Right cardiac atrium (tissue), 5 donors: ENCODE measurements at regions of chr17 and their contacts with region 1.

Region 1: DNA sequence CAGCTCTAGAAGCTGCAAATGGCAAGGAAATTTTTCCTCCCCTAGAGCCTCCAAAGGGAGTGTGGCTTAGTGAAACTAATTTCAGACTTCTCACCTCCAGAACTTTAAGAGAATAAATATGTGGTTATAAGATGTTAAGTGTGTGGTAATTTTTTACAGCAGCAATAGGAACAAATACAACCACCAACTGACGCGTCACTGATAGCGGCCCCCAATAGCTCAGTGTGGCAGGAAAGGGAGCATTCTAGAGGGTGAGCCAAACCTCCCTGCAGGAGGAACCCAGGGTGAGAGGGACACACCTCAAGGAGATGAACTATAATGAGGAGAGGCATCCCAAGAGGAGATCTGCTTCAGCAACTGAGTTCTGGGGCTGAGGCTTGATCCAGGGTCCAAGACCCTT is 4.0 kb downstream of the CCL4 start:
- DNase-seq: no peak
- ATAC-seq: no peak
- H3K4me3 ChIP-seq: no peak overlapping the region
- H3K27ac ChIP-seq: no peak overlapping the region
- H3K4me1 ChIP-seq: no peaks in the 10 kb centered on the region
- H3K27me3 ChIP-seq: no peaks in the 10 kb centered on the region

Region 2: DNA sequence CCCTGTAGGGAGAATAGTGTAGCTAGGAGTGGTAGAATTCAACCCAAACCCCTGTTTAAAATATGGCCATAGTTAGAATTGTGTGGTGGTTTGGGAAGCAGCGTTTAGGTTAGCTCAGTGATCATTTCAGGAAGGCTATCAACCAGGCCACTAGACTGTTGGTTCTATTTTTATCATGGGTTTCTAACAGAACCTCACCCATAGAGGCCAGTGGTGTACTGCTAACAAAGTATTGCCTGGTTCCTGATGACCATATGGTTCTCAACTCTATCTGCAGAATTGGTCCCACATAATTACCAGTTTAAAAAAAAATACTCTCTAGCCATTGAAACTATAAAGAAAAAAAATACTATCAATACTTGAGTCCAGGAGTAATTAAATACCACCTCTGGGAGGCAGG is 446.8 kb before region 1 on chr17:
- intact Hi-C with region 1: no loop called
- DNase-seq: no peak
- ATAC-seq: peak; percentile 57 to 75
- H3K4me3 ChIP-seq: no peak overlapping the region
- H3K27ac ChIP-seq: no peak overlapping the region
- H3K4me1 ChIP-seq: no peaks in the 10 kb centered on the region
- H3K27me3 ChIP-seq: no peaks in the 10 kb centered on the region

Region 3: GRCh38 chr17:36183001-36183971 is 75.6 kb after region 1 on chr17:
- intact Hi-C with region 1: loop called in 1 of 4 experiments (anchors 1 kb)
- DNase-seq: peak; percentile 73 to 88 (median 84)
- ATAC-seq: peak; percentile 90
- H3K4me3 ChIP-seq: peak overlapping the region; percentile 34
- H3K27ac ChIP-seq: no peak overlapping the region
- H3K4me1 ChIP-seq: no peaks in the 10 kb centered on the region
- H3K27me3 ChIP-seq: no peaks in the 10 kb centered on the region

Region 4: GRCh38 chr17:36697903-36698530 is 590.4 kb after region 1 on chr17:
- intact Hi-C with region 1: no loop called
- DNase-seq: no peak
- ATAC-seq: no peak
- H3K4me3 ChIP-seq: no peak overlapping the region
- H3K27ac ChIP-seq: no peak overlapping the region
- H3K4me1 ChIP-seq: no peaks in the 10 kb centered on the region
- H3K27me3 ChIP-seq: peaks cover 4% of the 10 kb centered on the region